ENCODE measurements at regions of chr13 and their contacts with region 1.

Region 1: DNA sequence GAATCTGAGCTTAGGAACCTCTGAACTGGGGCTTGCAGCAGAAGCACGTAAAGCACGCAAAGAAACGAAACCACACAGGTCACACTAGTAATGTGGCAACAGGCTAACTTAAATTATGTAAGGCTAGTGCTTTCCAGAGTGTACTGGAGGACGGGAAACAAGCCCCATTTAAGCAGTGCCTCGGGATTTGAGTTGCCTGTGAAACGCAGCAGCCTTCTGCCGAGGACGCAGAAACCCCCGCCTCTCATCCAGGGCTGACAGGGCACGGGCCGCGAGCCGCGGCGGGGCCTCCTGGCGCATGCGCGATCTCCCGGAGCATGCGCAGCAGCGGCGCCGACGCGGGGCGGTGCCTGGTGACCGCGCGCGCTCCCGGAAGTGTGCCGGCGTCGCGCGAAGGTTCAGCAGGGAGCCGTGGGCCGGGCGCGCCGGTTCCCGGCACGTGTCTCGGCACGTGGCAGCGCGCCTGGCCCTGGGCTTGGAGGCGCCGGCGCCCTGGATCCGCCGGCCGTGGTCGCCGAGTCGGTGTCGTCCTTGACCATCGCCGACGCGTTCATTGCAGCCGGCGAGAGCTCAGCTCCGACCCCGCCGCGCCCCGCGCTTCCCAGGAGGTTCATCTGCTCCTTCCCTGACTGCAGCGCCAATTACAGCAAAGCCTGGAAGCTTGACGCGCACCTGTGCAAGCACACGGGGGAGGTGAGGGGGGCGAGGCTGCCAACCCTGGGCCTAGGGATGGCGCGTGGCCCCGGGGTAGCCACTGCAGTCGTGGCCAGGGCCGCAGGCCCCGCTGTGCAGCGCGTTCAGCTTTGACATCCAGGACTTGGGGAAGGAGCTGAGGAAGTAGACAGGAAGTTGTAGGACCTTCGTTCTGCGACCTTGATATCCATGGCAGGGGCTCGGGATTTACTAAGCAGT is at the start of gene GTF3A:
- DNase-seq: peak; percentile 89
- H3K4me3 ChIP-seq: peak within 1 kb of the TSS; percentile 58 to 89 (median 84)
- H3K27ac ChIP-seq: peak within 1 kb of the TSS; percentile 85 to 91 (median 91)
- H3K4me1 ChIP-seq: peaks cover 0 to 38% (median 33%) of the 10 kb centered on the region in 4 donors
- H3K27me3 ChIP-seq: no peaks in the 10 kb centered on the region
- CTCF ChIP-seq: no peak
- EP300 ChIP-seq: no peak
- POLR2A ChIP-seq: peak; percentile 58 to 70
- total RNA-seq, gene GTF3A: 135 to 172 (median 154) TPM

Region 2: DNA sequence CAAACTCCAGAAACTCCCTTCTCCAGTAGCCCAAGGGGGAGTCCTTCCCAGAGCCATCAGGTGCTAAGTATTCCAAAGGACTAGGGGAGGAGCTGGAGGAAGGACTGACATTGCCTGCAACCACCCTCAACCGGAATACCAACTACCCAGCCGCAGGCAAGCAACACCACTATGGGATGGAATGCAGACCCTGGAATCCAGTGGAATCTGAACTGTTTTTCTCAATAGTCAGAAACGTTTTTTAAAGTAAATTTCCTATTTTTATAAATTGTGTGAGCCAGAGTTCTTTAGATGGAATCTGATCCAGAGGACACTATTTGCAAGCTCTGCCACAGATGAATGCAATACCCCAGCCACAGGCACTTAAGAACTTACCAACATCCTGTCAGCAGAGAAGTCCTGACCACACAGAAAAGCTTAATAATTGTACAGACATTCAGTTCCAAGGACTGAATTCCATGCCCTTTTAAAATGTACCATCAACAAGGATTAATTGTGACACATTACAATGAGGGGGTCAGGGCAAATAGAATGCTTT is 345.0 kb before region 1 on chr13:
- intact Hi-C with region 1: no loop called
- DNase-seq: no peak
- H3K4me3 ChIP-seq: no peak overlapping the region
- H3K27ac ChIP-seq: peak overlapping the region; percentile 5 to 64 (median 26)
- H3K4me1 ChIP-seq: peaks cover 0 to 51% (median 38%) of the 10 kb centered on the region in 4 donors
- H3K27me3 ChIP-seq: no peaks in the 10 kb centered on the region
- CTCF ChIP-seq: no peak
- EP300 ChIP-seq: no peak
- POLR2A ChIP-seq: no peak

Region 3: GRCh38 chr13:27270594-27271520 is 153.6 kb before region 1 on chr13 and contains the start of gene RASL11A:
- intact Hi-C with region 1: loop called (anchors 10 kb)
- DNase-seq: peak; percentile 95
- H3K4me3 ChIP-seq: peak within 1 kb of the TSS; percentile 73 to 85 (median 79)
- H3K27ac ChIP-seq: peak within 1 kb of the TSS; percentile 92 to 96 (median 96)
- H3K4me1 ChIP-seq: peaks cover 0 to 41% (median 34%) of the 10 kb centered on the region in 4 donors
- H3K27me3 ChIP-seq: no peaks in the 10 kb centered on the region
- CTCF ChIP-seq: peak; percentile 77 to 99 (median 86)
- EP300 ChIP-seq: no peak
- POLR2A ChIP-seq: peak; percentile 61 to 69
- total RNA-seq, gene RASL11A: 14.1 to 123 (median 18.4) TPM

Region 4: DNA sequence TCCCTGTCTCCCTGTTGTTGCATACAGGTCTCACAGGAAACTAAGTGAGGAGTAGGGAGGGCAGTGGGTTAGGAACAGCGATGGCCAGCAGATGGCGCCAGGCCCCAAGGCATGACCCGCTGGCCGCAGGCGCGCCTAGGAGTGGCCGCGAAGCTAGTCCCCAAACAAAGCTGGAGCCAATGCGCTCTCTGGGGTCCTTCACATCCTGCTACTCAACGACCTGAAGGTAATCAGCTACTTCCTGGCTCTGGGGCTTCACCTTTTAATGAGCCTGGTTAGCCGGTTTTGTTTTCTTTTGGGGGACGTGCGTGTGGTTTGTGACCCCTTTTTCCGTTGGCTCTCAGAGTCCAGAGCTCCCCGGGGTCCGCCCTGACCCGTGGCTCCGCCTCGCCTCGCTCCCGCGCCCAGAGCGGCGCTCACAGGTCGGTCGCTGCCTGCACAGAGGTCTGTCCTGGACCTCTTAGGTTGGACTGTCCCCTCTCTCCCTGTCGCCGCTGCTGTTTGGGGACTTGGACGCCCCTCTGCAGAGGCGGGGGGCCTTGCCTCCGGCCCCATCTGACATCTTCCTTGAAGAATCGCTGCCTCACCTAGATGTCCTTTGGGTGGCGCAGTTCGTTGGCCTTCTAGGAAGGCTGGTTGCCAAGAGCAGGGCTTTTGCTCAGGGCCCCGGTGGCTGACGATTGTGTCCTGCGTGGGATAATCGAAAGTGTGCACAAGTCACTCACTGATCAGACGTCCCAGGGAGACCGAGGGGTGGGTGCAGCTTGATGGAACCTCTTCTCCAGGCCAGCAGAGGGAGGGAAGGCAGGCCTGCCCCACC is 62.2 kb before region 1 on chr13:
- intact Hi-C with region 1: loop called (anchors 5 kb)
- DNase-seq: peak; percentile 91
- H3K4me3 ChIP-seq: peak overlapping the region; percentile 18 to 54 (median 46)
- H3K27ac ChIP-seq: peak overlapping the region in 1 of 4 donors; percentile 37
- H3K4me1 ChIP-seq: peaks cover 0 to 17% (median 12%) of the 10 kb centered on the region in 4 donors
- H3K27me3 ChIP-seq: peaks cover 0 to 7% (median 0%) of the 10 kb centered on the region in 3 donors
- CTCF ChIP-seq: peak; percentile 75 to 91 (median 84)
- EP300 ChIP-seq: no peak
- POLR2A ChIP-seq: no peak

Region 5: GRCh38 chr13:27374650-27375049 is 49.9 kb before region 1 on chr13:
- intact Hi-C with region 1: loop called (anchors 5 kb)
- DNase-seq: peak; percentile 78
- H3K4me3 ChIP-seq: no peak overlapping the region
- H3K27ac ChIP-seq: no peak overlapping the region
- H3K4me1 ChIP-seq: peaks cover 0 to 10% (median 6%) of the 10 kb centered on the region in 4 donors
- H3K27me3 ChIP-seq: peaks cover 0 to 27% (median 0%) of the 10 kb centered on the region in 3 donors
- CTCF ChIP-seq: peak; percentile 50 to 74 (median 71)
- EP300 ChIP-seq: no peak
- POLR2A ChIP-seq: no peak

Region 6: DNA sequence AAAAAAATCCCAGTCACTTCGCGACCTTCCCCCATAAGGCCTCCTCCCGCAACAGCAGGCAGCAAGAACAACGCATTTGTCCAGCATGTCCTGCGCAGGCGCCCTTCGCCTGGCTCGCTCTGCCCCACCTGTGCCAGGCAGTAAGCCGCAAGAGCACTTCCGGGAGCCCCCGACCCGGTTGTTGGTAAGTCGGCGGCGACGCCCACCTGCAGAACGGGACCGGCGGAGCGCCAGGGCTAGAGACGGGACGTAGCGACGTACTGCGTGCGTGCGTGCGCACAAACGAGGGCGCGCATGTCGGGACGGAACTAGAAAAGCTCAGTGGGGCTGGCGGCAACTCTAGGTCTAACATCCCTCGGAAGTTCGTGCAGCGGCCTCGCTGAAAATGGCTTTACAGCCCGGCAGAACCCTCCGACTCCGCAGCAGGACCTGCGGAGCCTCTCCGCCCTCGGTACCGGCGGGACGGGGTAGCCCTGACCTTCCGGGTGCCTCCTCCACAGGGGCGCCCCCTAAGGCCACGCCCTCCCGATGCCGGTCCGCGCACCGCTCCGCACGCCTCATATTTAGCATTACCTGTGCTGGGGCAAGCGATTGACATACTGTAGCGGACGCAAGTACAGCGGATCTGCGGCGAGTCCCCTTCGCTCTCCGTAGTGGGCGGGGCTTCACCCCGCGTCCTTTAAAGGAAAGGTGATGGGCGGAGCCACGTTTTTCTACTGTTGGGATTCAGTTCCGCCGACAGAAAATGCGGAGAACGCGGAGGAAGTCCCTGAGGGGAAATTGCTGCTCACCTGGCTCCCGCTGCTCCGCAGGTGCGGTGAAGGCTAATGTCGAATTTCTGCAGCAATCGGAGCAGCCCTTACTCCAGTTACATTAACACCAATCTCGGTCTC is 25.7 kb after region 1 on chr13 and contains the start of gene MTIF3:
- intact Hi-C with region 1: loop called (anchors 1 kb)
- DNase-seq: peak; percentile 96
- H3K4me3 ChIP-seq: peak within 1 kb of the TSS; percentile 68 to 98 (median 90)
- H3K27ac ChIP-seq: peak within 1 kb of the TSS; percentile 95 to 100 (median 98)
- H3K4me1 ChIP-seq: peaks cover 0 to 45% (median 28%) of the 10 kb centered on the region in 4 donors
- H3K27me3 ChIP-seq: no peaks in the 10 kb centered on the region
- CTCF ChIP-seq: peak in 1 of 4 experiments; percentile 32
- EP300 ChIP-seq: peak in 1 of 4 donors; percentile 16
- POLR2A ChIP-seq: peak; percentile 78 to 84
- total RNA-seq, gene MTIF3: 64.3 to 102 (median 74.4) TPM

Region 7: GRCh38 chr13:27620377-27621115 is 196.0 kb after region 1 on chr13 and contains the start of gene LNX2:
- intact Hi-C with region 1: loop called (anchors 5 kb)
- DNase-seq: peak; percentile 99
- H3K4me3 ChIP-seq: peak within 1 kb of the TSS; percentile 85 to 95 (median 92)
- H3K27ac ChIP-seq: peak within 1 kb of the TSS; percentile 91 to 98 (median 96)
- H3K4me1 ChIP-seq: peaks cover 0 to 38% (median 27%) of the 10 kb centered on the region in 4 donors
- H3K27me3 ChIP-seq: no peaks in the 10 kb centered on the region
- CTCF ChIP-seq: no peak
- EP300 ChIP-seq: no peak
- POLR2A ChIP-seq: peak; percentile 63 to 77
- total RNA-seq, gene LNX2: 7.7 to 13.9 (median 10.6) TPM

Region 8: DNA sequence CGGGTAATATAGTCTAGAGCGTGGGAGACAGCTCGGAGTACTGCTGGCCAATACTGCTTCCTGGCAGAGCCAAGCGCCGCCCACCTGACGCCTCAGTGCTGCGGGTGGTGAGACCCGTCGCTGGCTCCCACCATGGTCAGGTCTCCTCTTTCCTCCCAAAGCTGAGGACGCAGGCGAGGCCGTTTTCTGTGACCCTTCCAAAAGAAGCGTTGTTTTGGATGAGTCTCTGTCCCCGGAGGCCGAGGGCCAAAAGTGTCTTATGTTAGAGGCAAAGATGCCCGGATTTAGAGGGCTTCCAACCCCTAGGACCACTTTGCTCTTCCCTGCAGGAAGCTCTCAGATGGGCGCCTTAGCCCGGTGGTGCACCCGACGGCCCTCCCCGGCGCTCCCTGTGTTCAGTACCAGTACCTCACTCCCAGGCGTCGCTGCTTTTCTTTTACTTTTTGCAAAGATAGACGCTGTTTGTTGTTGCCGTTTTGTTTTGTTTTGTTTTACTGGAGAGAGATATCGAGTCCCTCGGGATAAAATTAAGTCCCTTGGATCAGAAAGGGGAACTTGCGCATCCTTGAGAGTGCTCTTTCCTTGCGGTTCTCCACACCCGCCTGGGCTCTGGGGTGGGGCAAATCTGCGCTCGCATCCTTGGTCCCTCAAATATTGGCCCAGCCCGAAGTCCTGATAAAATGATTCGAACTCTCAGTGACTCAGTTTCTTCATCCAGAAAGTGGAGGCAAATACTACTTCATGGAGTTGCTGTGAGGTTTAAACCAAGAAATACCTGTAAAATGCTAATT is 502.3 kb after region 1 on chr13:
- intact Hi-C with region 1: no loop called
- DNase-seq: no peak
- H3K4me3 ChIP-seq: no peak overlapping the region
- H3K27ac ChIP-seq: no peak overlapping the region
- H3K4me1 ChIP-seq: peaks cover 0 to 22% (median 15%) of the 10 kb centered on the region in 4 donors
- H3K27me3 ChIP-seq: peaks cover 67 to 100% (median 90%) of the 10 kb centered on the region in 3 donors
- CTCF ChIP-seq: no peak
- EP300 ChIP-seq: no peak
- POLR2A ChIP-seq: no peak

Measured in sigmoid colon (tissue), 7 donors.